Left cardiac atrium (tissue), 4 donors: ENCODE measurements at regions of chr3 and their contacts with region 1.

Region 1: GRCh38 chr3:129824926-129825541 is 68.5 kb downstream of the TMCC1 start:
- DNase-seq: peak; percentile 29
- ATAC-seq: peak in 1 of 2 donors; percentile 33

Region 2: DNA sequence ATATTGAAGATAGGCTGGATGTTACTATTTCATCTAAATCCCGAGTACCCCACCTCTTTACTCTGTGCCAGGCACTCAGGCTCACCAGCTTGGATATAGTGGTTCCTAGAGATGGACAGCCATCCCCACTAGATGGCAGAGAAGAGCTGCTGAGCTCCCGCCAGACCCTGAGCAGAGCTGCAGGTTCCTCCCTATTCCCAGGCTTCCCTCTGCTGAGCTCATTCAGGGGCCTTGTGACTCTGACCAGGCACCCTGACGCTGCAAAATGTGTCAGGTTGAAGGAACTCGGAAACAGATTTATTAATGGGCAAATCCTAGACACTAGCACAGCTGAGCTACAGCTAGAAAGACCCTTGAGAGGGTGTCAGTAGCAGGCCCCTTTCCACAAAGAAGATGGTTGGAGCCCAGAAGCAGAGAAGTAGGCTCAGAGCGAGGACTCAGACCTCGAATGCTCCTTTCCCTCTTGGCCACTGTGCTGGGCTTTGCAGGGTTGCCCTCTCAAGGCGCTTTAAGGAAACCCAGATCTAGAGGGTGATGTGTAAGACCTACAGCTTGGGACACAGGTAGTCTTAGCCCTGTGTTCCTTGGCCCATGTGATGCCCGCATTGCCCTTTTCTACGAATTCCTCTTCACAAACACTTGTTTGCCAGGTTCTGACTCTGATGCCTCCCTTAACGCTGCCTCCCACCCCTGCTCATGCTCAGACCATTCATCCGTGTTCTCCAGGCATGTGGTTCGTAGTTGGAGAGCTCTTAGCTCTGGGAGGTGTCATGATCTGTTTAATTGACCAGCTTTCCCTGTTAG is 334.6 kb before region 1 on chr3:
- intact Hi-C with region 1: loop called in 1 of 2 experiments (anchors 5 kb)
- DNase-seq: peak; percentile 83
- ATAC-seq: peak; percentile 90

Region 3: GRCh38 chr3:129627429-129628168 is 197.4 kb before region 1 on chr3:
- intact Hi-C with region 1: loop called (anchors 5 kb)
- DNase-seq: peak; percentile 71
- ATAC-seq: peak; percentile 44 to 50

Region 4: GRCh38 chr3:129650256-129650872 is 174.7 kb before region 1 on chr3:
- intact Hi-C with region 1: loop called (anchors 2 to 5 kb)
- DNase-seq: peak; percentile 66
- ATAC-seq: peak; percentile 74 to 83

Region 5: GRCh38 chr3:130093741-130094391 is 268.8 kb after region 1 on chr3:
- intact Hi-C with region 1: no loop called
- DNase-seq: no peak
- ATAC-seq: no peak